ENCODE measurements at regions of chr22 and their contacts with region 1.

Region 1: GRCh38 chr22:31080848-31081649 is at the start of gene SMTN:
- DNase-seq: peak; percentile 93
- H3K4me3 Mint-ChIP-seq: peak within 1 kb of the TSS; percentile 86
- H3K27ac Mint-ChIP-seq: peak within 1 kb of the TSS; percentile 93
- H3K4me1 Mint-ChIP-seq: peaks cover 33% of the 10 kb centered on the region
- H3K27me3 Mint-ChIP-seq: no peaks in the 10 kb centered on the region
- CTCF ChIP-seq: no peak
- total RNA-seq, gene SMTN: 69.5 and 80.2 TPM in 2 replicates

Region 2: DNA sequence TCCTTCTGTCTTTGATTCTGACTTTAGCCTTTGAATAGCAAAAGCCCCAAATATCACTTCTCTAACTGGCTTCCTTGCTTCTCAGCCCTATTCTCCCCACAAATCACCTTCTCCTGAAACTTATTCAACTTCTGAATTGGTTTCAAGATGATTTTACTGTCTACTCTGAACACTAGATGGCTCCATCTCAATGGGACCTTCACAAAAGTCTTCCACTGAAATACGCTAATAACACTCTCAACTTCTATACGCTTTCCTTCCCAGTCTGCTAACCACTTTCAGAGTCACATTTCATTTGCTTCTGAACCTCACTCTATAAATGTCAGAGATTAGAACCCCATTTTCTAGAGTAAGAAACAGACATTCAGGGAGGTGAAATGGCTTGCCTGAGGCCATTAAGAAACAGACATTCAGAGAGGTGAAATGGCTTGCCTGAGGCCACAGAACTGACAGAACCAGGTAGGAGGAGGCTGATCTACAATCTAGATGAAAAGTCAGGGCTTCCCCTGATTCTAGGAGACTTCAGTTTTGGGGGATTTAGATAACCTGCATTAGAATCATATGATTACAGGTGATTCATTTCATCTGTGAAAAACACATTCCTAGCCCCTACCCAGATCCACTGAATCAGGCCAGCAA is 133.1 kb before region 1 on chr22:
- CTCF ChIA-PET with region 1: interaction called, 28 read pairs
- POLR2A ChIA-PET with region 1: interaction called, 13 read pairs
- intact Hi-C with region 1: loop called (anchors 1 kb)
- DNase-seq: peak; percentile 45
- H3K4me3 Mint-ChIP-seq: no peak overlapping the region
- H3K27ac Mint-ChIP-seq: no peak overlapping the region
- H3K4me1 Mint-ChIP-seq: no peaks in the 10 kb centered on the region
- H3K27me3 Mint-ChIP-seq: no peaks in the 10 kb centered on the region
- CTCF ChIP-seq: peak; percentile 51

Region 3: DNA sequence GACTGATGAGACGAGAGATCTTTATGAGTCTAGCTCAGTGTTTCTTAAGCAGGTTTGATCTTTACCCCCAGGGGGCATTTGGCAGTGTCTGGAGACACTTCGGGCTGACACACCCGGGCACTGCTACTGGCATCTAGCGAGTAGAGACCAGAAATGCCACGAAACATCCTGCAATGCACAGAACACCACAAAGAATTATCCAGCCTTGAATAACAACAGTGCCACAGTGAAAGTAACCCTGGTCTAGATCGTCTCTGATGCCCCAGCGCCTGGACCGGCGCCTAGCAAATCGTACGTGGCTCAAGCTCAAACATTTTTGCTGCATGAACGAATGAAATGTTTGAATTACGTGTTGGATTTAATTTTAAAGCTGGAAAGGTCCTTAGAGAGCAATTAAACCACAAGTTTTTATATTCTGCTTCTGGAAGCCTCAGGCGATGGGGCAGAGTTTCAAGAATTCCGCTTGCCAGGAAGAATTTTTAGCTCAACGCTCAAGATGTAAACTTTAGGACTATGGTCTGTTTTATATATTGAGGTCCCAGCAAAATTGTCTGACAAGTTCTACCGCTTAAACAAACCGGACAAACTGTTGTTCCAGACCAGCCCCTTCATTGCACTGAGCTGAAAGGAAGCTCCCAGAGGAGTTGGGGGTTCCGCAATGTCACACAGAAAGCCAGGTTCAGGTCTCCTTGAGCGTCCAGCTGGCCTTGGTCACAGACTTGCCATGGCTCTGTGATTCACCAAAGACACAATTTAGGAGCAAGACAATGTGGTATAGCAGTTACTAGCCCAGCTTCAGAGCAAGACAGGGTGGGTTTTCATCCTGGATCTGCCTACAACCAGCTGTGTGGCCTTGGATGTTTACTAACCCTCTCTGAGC is 44.1 kb before region 1 on chr22:
- CTCF ChIA-PET with region 1: interaction called, 19 read pairs
- POLR2A ChIA-PET with region 1: interaction called, 9 read pairs
- intact Hi-C with region 1: loop called (anchors 1 kb)
- DNase-seq: peak; percentile 78
- H3K4me3 Mint-ChIP-seq: peak overlapping the region; percentile 46
- H3K27ac Mint-ChIP-seq: peak overlapping the region; percentile 11
- H3K4me1 Mint-ChIP-seq: peaks cover 14% of the 10 kb centered on the region
- H3K27me3 Mint-ChIP-seq: no peaks in the 10 kb centered on the region
- CTCF ChIP-seq: no peak

Region 4: GRCh38 chr22:31062566-31063230 is 18.4 kb before region 1 on chr22:
- CTCF ChIA-PET with region 1: interaction called, 6 read pairs
- POLR2A ChIA-PET with region 1: interaction called, 80 read pairs
- intact Hi-C with region 1: loop called (anchors 2 kb)
- DNase-seq: peak; percentile 83
- H3K4me3 Mint-ChIP-seq: no peak overlapping the region
- H3K27ac Mint-ChIP-seq: peak overlapping the region; percentile 82
- H3K4me1 Mint-ChIP-seq: peaks cover 7% of the 10 kb centered on the region
- H3K27me3 Mint-ChIP-seq: no peaks in the 10 kb centered on the region
- CTCF ChIP-seq: no peak